GM12878 (cell line): ENCODE measurements at regions of chr11 and their contacts with region 1.

Region 1: GRCh38 chr11:42786981-42787380 is 524.8 kb upstream of the API5 start:
- DNase-seq: no peak
- ATAC-seq: no peak
- H3K4me3 ChIP-seq: no peak overlapping the region
- H3K27ac ChIP-seq: no peak overlapping the region
- H3K4me1 ChIP-seq: no peaks in the 10 kb centered on the region
- H3K27me3 ChIP-seq: no peaks in the 10 kb centered on the region
- CTCF ChIP-seq: no peak
- EP300 ChIP-seq: no peak
- POLR2A ChIP-seq: no peak
- RAD21 ChIP-seq: no peak

Region 2: GRCh38 chr11:42812361-42812760 is 25.4 kb after region 1 on chr11:
- CTCF ChIA-PET with region 1: interaction called, 3 read pairs
- POLR2A ChIA-PET with region 1: interaction called, 3 read pairs
- RAD21 ChIA-PET with region 1: interaction called, 6 read pairs
- SMC1A ChIA-PET with region 1: interaction called, 12 read pairs
- in situ Hi-C with region 1: no loop called
- intact Hi-C with region 1: no loop called
- DNase-seq: no peak
- ATAC-seq: peak; percentile 48; the same call in 2 of the 3 replicates
- H3K4me3 ChIP-seq: no peak overlapping the region
- H3K27ac ChIP-seq: no peak overlapping the region
- H3K4me1 ChIP-seq: no peaks in the 10 kb centered on the region
- H3K27me3 ChIP-seq: no peaks in the 10 kb centered on the region
- CTCF ChIP-seq: no peak
- EP300 ChIP-seq: no peak
- POLR2A ChIP-seq: no peak
- RAD21 ChIP-seq: no peak

Region 3: GRCh38 chr11:42890773-42891172 is 103.8 kb after region 1 on chr11:
- CTCF ChIA-PET with region 1: no interaction called
- POLR2A ChIA-PET with region 1: no interaction called
- RAD21 ChIA-PET with region 1: no interaction called
- SMC1A ChIA-PET with region 1: no interaction called
- in situ Hi-C with region 1: no loop called
- intact Hi-C with region 1: no loop called
- DNase-seq: no peak
- ATAC-seq: no peak
- H3K4me3 ChIP-seq: no peak overlapping the region
- H3K27ac ChIP-seq: no peak overlapping the region
- H3K4me1 ChIP-seq: no peaks in the 10 kb centered on the region
- H3K27me3 ChIP-seq: no peaks in the 10 kb centered on the region
- CTCF ChIP-seq: no peak
- EP300 ChIP-seq: no peak
- POLR2A ChIP-seq: no peak
- RAD21 ChIP-seq: no peak